ENCODE measurements at regions of chr1 and their contacts with region 1.

Region 1: DNA sequence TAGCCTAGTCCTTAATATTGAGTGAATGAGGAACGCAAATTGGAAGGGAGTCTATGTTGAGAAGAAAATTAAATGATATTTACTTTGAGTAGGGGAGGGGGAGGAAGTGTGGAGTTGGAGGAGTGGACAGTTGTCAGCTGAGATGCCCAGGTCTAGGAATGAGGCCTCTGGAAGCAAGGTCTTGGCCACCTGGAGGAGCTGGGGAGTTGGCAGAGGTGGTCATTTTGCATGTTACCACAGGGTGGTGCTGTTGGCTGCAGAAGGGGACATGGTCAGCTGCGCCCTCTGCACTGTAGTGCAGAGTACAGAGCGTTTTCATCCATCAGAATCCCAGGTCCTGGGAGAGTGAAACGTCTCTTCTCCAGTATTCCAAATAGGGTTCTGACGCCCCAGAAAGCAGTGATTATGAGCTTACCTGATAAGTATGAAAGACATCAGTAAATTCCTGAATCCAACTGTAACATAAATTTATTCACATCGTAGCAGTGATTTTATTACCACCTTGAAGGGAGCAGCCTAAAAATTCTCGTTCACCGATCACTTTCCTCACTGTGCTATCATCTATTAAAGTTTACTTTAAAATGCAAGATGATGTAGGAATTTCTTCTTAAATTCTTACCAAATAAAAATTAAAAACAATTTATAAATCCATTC is 13.8 kb downstream of the PARK7 start:
- DNase-seq: peak; percentile 68
- ATAC-seq: peak; percentile 100
- H3K4me3 ChIP-seq: no peak overlapping the region
- H3K27ac ChIP-seq: no peak overlapping the region
- H3K4me1 ChIP-seq: peaks cover 0 to 3% of the 10 kb centered on the region in 2 experiments; a peak in 1 of 4 replicates
- H3K27me3 ChIP-seq: no peaks in the 10 kb centered on the region
- CTCF ChIP-seq: peak; percentile 95 to 99 (median 99)
- POLR2A ChIP-seq: no peak
- RAD21 ChIP-seq: peak; percentile 97

Region 2: GRCh38 chr1:7704214-7705047 is 270.9 kb before region 1 on chr1:
- CTCF ChIA-PET with region 1: no interaction called
- POLR2A ChIA-PET with region 1: no interaction called
- RAD21 ChIA-PET with region 1: no interaction called
- intact Hi-C with region 1: no loop called
- DNase-seq: peak; percentile 77
- ATAC-seq: peak; percentile 94
- H3K4me3 ChIP-seq: peak overlapping the region; percentile 65 to 72
- H3K27ac ChIP-seq: peak overlapping the region; percentile 64; the same call in 1 of the 2 replicates
- H3K4me1 ChIP-seq: peaks cover 5 to 14% of the 10 kb centered on the region in 2 experiments; a peak in 3 of 4 replicates
- H3K27me3 ChIP-seq: peaks cover 3% of the 10 kb centered on the region; the same call in 1 of the 2 replicates
- CTCF ChIP-seq: no peak
- POLR2A ChIP-seq: peak; percentile 32
- RAD21 ChIP-seq: no peak

Region 3: DNA sequence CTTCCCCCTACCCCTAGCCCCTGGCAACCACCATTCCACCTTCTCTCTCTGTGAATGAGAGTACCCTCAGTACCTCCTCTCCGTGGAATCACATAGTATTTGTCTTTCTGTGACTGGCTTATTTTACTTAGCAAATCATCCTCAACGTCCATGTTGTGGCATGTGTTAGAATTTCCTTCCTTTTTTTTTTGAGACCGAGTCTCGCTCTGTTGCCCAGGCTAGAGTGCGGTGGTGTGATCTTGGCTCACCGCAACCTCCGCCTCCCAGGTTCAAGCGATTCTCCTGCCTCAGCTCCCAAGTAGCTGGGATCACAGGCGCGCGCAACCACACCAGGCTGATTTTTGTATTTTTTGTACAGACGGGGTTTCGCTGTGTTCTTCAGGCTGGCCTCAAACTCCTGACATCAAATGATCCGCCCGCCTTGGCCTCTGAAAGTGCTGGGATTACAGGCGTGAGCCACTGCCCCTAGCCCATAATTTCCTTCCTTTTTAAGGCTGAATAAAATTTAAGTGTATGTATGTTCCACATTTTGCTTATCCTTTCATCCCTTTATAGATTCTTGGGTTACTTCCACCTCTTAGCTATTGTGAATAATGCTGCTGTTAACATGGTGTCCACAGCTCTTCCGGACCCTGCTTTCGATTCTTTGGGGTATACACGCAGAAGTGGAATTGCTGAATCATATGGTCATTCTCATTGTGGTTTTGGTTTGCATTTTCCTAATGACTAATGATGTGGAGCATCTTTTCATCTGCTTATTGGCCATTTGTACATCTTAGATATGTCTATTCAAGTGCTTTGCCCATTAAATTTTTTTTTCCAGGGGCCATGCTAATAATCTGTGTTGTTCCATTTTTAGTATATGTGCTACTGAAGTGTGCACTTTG is 18.5 kb after region 1 on chr1:
- CTCF ChIA-PET with region 1: no interaction called
- POLR2A ChIA-PET with region 1: no interaction called
- RAD21 ChIA-PET with region 1: no interaction called
- intact Hi-C with region 1: no loop called
- DNase-seq: no peak
- ATAC-seq: no peak
- H3K4me3 ChIP-seq: no peak overlapping the region
- H3K27ac ChIP-seq: no peak overlapping the region
- H3K4me1 ChIP-seq: peaks cover 0 to 1% of the 10 kb centered on the region in 2 experiments; a peak in 2 of 4 replicates
- H3K27me3 ChIP-seq: no peaks in the 10 kb centered on the region
- CTCF ChIP-seq: no peak
- POLR2A ChIP-seq: no peak
- RAD21 ChIP-seq: no peak

Region 4: GRCh38 chr1:8217011-8217711 is 241.8 kb after region 1 on chr1:
- CTCF ChIA-PET with region 1: no interaction called
- POLR2A ChIA-PET with region 1: no interaction called
- RAD21 ChIA-PET with region 1: no interaction called
- intact Hi-C with region 1: no loop called
- DNase-seq: no peak
- ATAC-seq: no peak
- H3K4me3 ChIP-seq: no peak overlapping the region
- H3K27ac ChIP-seq: no peak overlapping the region; the same call in 1 of the 2 replicates
- H3K4me1 ChIP-seq: peaks cover 38 to 59% of the 10 kb centered on the region in 2 experiments
- H3K27me3 ChIP-seq: no peaks in the 10 kb centered on the region
- CTCF ChIP-seq: no peak
- POLR2A ChIP-seq: no peak
- RAD21 ChIP-seq: no peak

Region 5: DNA sequence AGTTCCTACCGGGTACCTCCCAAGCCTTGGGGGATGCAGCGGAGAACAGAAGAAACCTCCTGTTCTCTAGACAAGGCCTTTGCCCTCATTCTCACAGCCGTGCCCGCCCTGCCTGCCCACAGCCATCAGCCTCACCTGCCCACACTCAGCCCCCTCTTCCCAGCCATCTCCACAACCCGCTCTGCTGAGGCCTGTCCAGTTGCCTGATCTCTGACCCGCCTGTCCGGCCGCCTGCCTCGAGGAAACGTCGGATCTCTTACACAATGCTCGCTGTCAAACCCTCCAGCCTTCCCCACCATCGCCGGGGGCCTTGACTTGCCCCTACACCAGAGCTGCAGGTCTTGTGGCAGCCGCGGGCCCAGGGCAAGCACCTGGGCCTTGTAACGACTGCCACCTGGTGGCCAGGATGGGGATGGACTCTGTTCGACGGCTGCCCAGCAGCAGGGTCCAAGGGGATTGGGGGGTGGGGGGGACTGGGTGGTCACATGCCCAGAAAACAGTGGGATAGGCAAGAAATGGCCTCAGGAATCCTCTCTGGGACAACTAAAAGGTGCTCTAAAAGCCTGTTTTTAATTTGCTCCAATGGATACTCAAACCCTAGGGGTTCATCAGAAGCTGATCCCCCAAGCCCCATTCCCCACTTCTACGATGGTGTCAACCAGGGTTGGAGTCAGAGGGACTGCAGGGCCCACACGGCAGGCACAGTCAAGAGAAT is 373.6 kb after region 1 on chr1:
- CTCF ChIA-PET with region 1: interaction called, 35 read pairs
- POLR2A ChIA-PET with region 1: interaction called, 3 read pairs
- RAD21 ChIA-PET with region 1: interaction called, 4 to 6 read pairs
- intact Hi-C with region 1: loop called (anchors 1 kb)
- DNase-seq: peak; percentile 27
- ATAC-seq: peak; percentile 82
- H3K4me3 ChIP-seq: no peak overlapping the region
- H3K27ac ChIP-seq: no peak overlapping the region
- H3K4me1 ChIP-seq: peaks cover 3 to 26% of the 10 kb centered on the region in 2 experiments
- H3K27me3 ChIP-seq: no peaks in the 10 kb centered on the region
- CTCF ChIP-seq: peak; percentile 84 to 92 (median 87)
- POLR2A ChIP-seq: no peak
- RAD21 ChIP-seq: peak; percentile 98

Region 6: DNA sequence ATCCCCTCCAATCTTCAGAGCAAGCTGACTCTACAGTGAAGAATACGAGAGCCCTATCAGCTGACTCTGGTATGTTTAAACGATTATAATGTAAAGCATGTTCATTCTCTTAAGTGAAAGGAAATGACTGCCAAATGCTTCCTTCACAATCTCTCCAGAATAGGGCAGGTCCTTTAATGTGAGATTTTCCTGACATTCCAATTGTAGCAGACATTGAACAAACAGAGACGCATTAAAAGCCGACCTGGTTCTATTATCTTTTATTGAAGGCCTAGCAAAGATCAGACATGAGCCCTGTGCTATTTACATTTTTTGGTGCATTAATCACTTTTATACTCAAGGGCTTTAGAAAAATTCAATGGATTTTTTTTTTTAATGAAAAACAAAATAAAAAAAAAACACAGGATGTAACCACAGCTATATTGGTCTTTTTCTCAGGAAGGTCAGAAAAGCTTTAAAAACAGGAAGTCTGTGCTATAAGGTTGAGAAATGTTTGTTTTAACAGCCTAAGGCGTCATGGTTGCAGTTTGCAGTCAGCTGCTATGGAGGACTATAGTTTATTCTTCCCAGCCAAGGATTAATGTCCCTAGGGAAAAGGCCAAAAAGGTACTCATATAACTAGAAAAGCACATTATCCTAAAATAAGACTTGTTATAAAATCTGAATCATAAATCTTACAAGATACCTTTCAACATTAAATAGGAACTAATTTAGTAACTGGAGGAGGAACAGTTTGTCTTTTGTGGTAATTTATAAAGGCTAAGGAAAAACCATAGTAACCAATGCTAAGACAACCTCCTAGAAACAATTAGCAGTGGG is 737.3 kb after region 1 on chr1:
- CTCF ChIA-PET with region 1: no interaction called
- POLR2A ChIA-PET with region 1: no interaction called
- RAD21 ChIA-PET with region 1: no interaction called
- intact Hi-C with region 1: loop called (anchors 10 kb)
- DNase-seq: no peak
- ATAC-seq: peak; percentile 36; the same call in 1 of the 2 replicates
- H3K4me3 ChIP-seq: no peak overlapping the region
- H3K27ac ChIP-seq: peak overlapping the region; percentile 22; the same call in 1 of the 2 replicates
- H3K4me1 ChIP-seq: peaks cover 0 to 31% of the 10 kb centered on the region in 2 experiments; a peak in 2 of 4 replicates
- H3K27me3 ChIP-seq: no peaks in the 10 kb centered on the region
- CTCF ChIP-seq: no peak
- POLR2A ChIP-seq: no peak
- RAD21 ChIP-seq: no peak

Measured in HCT116 (cell line).